HCT116 (cell line): ENCODE measurements at regions of chr6 and their contacts with region 1.

Region 1: GRCh38 chr6:150079604-150080003 is 10.7 kb upstream of the ULBP3 start:
- DNase-seq: no peak
- ATAC-seq: no peak
- H3K4me3 ChIP-seq: no peak overlapping the region
- H3K27ac ChIP-seq: no peak overlapping the region
- H3K4me1 ChIP-seq: peaks cover 2 to 20% of the 10 kb centered on the region in 2 experiments; a peak in 3 of 4 replicates
- H3K27me3 ChIP-seq: no peaks in the 10 kb centered on the region
- CTCF ChIP-seq: no peak
- POLR2A ChIP-seq: no peak
- RAD21 ChIP-seq: no peak

Region 2: DNA sequence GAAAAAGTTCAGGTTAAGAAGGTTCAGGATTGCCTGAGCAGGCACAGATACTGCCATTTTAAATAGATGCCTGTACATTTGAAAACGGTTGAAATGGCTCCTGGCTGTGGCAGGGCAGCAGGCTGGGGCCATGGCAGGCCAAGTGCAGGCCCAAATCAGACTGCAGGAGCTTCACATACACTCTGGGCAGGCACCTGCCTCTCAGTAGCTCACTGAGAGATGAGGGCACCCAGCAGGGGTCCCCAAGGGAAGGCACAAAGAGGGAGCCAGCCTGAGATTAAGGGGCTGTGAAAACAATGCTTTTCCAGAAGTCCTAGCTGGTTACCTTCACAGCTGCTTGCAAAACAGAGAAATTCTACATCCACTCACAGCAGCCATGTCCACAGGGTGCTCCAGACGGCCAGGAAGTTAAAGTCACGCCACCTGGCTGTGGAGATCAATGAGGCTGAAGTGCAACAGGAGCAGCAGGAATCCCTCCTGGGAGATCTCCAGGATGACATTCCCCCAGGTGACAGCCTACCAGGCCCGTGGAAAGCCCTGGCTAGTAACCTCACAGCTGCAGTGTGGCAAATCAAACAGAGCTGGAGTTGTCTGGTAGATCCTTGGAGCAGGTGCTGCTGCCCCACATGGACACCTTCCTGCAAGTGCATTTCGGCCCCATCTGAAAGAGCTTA is 175.5 kb before region 1 on chr6:
- CTCF ChIA-PET with region 1: no interaction called
- POLR2A ChIA-PET with region 1: no interaction called
- RAD21 ChIA-PET with region 1: no interaction called
- intact Hi-C with region 1: no loop called
- DNase-seq: no peak
- ATAC-seq: peak; percentile 30; the same call in 1 of the 2 replicates
- H3K4me3 ChIP-seq: no peak overlapping the region
- H3K27ac ChIP-seq: no peak overlapping the region
- H3K4me1 ChIP-seq: no peaks in the 10 kb centered on the region
- H3K27me3 ChIP-seq: no peaks in the 10 kb centered on the region
- CTCF ChIP-seq: 0 out of 6 replicates have a peak, but pooled peaks of 2 of the 3 experiments have one; percentile 1 to 9
- POLR2A ChIP-seq: no peak
- RAD21 ChIP-seq: 0 out of 2 replicates have a peak, but pooled peaks have one; percentile 12

Region 3: DNA sequence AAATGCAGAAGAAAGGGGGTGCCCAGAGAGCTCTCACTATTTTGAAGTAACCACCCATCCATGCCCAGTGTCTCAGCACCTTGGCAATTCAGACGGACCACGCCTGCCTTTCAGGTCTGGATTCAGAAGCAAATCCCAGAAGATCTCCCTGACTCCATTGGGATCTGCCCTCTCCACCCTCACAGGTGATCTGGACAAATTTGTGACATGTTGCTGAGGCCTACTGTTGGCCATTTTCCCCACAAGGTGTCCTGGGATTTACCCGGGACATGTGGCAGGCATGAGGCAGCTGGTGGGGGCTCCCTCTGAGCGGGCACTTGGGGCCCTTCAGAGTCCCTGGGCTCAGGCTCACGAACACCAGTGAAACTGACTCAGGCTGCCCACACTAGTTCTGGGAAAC is 237.3 kb after region 1 on chr6:
- CTCF ChIA-PET with region 1: interaction called, 10 read pairs
- POLR2A ChIA-PET with region 1: no interaction called
- RAD21 ChIA-PET with region 1: no interaction called
- intact Hi-C with region 1: no loop called
- DNase-seq: no peak
- ATAC-seq: no peak
- H3K4me3 ChIP-seq: no peak overlapping the region
- H3K27ac ChIP-seq: no peak overlapping the region
- H3K4me1 ChIP-seq: no peaks in the 10 kb centered on the region
- H3K27me3 ChIP-seq: no peaks in the 10 kb centered on the region
- CTCF ChIP-seq: no peak
- POLR2A ChIP-seq: no peak
- RAD21 ChIP-seq: no peak

Region 4: DNA sequence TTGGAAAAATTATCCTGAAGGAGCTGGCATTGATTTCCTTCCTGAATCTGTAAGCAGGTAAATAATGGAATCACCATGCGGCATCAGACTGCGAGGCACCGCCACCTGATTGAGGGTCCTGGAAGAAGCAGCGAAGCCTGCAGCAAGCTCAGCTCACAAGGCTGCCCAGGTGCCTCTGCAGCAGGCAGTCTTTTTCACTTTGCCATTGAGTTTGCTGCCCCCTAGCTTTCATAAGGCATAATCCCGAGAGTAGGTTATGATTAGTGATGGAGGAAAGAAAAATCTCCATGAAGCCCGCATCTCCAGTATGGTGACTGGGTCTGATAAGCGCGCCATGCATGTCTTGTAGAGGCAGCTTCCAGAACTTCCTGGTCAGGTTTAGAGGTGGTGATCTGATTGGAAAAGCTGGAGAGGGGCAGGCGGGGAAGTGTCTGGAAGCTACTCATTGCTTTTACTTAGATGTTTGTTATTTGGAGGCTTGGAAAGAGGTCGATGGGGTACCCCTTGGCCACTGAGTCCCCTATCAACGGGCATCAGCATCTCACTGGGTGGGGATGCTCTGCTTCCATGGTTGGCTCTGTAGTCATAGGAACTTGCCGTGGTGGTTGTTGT is 315.9 kb after region 1 on chr6:
- CTCF ChIA-PET with region 1: interaction called, 55 read pairs
- POLR2A ChIA-PET with region 1: no interaction called
- RAD21 ChIA-PET with region 1: interaction called, 4 to 13 read pairs
- intact Hi-C with region 1: no loop called
- DNase-seq: peak; percentile 49
- ATAC-seq: peak; percentile 97
- H3K4me3 ChIP-seq: no peak overlapping the region
- H3K27ac ChIP-seq: no peak overlapping the region
- H3K4me1 ChIP-seq: peaks cover 0 to 3% of the 10 kb centered on the region in 2 experiments; a peak in 1 of 4 replicates
- H3K27me3 ChIP-seq: no peaks in the 10 kb centered on the region
- CTCF ChIP-seq: peak; percentile 69 to 89 (median 83)
- POLR2A ChIP-seq: no peak
- RAD21 ChIP-seq: peak; percentile 95

Region 5: GRCh38 chr6:150417899-150418826 is 338.6 kb after region 1 on chr6:
- CTCF ChIA-PET with region 1: interaction called, 10 read pairs
- POLR2A ChIA-PET with region 1: no interaction called
- RAD21 ChIA-PET with region 1: no interaction called
- intact Hi-C with region 1: loop called (anchors 5 kb)
- DNase-seq: peak; percentile 88
- ATAC-seq: peak; percentile 83
- H3K4me3 ChIP-seq: peak overlapping the region; percentile 13 to 50
- H3K27ac ChIP-seq: peak overlapping the region; percentile 40; the same call in 1 of the 2 replicates
- H3K4me1 ChIP-seq: peaks cover 13 to 20% of the 10 kb centered on the region in 2 experiments
- H3K27me3 ChIP-seq: no peaks in the 10 kb centered on the region
- CTCF ChIP-seq: peak; percentile 80 to 88 (median 83)
- POLR2A ChIP-seq: no peak
- RAD21 ChIP-seq: peak; percentile 96